ENCODE measurements at regions of chr18 and their contacts with region 1.

Region 1: GRCh38 chr18:23131693-23132319 is 3.5 kb upstream of the CABLES1 start:
- DNase-seq: peak in 8 of 9 donors; percentile 33 to 73 (median 58)
- ATAC-seq: peak; percentile 64
- H3K4me3 ChIP-seq: no peak overlapping the region
- H3K4me3 Mint-ChIP-seq: no peak overlapping the region
- H3K27ac ChIP-seq: no peak overlapping the region
- H3K27ac Mint-ChIP-seq: peak overlapping the region in 1 of 9 donors; percentile 9
- H3K4me1 ChIP-seq: peaks cover 0 to 14% of the 10 kb centered on the region in 2 donors
- H3K4me1 Mint-ChIP-seq: peaks cover 0 to 20% (median 15%) of the 10 kb centered on the region in 7 donors
- H3K27me3 ChIP-seq: peaks cover 3 to 9% of the 10 kb centered on the region in 2 donors
- H3K27me3 Mint-ChIP-seq: peaks cover 16 to 30% (median 25%) of the 10 kb centered on the region in 5 donors

Region 2: GRCh38 chr18:23032030-23032582 is 99.7 kb before region 1 on chr18:
- CTCF ChIA-PET with region 1: interaction called, 3 read pairs
- POLR2A ChIA-PET with region 1: no interaction called
- intact Hi-C with region 1: loop called (anchors 1 to 2 kb)
- DNase-seq: no peak
- ATAC-seq: no peak
- H3K4me3 ChIP-seq: no peak overlapping the region
- H3K4me3 Mint-ChIP-seq: no peak overlapping the region
- H3K27ac ChIP-seq: no peak overlapping the region
- H3K27ac Mint-ChIP-seq: peak overlapping the region in 2 of 9 donors; percentile 51
- H3K4me1 ChIP-seq: no peaks in the 10 kb centered on the region
- H3K4me1 Mint-ChIP-seq: peaks cover 0 to 12% (median 8%) of the 10 kb centered on the region in 7 donors
- H3K27me3 ChIP-seq: no peaks in the 10 kb centered on the region
- H3K27me3 Mint-ChIP-seq: no peaks in the 10 kb centered on the region

Region 3: GRCh38 chr18:23106580-23106979 is 25.2 kb before region 1 on chr18:
- CTCF ChIA-PET with region 1: interaction called, 10 read pairs
- POLR2A ChIA-PET with region 1: no interaction called
- intact Hi-C with region 1: no loop called
- DNase-seq: no peak
- ATAC-seq: no peak
- H3K4me3 ChIP-seq: no peak overlapping the region
- H3K4me3 Mint-ChIP-seq: no peak overlapping the region
- H3K27ac ChIP-seq: no peak overlapping the region
- H3K27ac Mint-ChIP-seq: peak overlapping the region in 1 of 9 donors; percentile 15
- H3K4me1 ChIP-seq: no peaks in the 10 kb centered on the region
- H3K4me1 Mint-ChIP-seq: peaks cover 0 to 11% (median 7%) of the 10 kb centered on the region in 7 donors
- H3K27me3 ChIP-seq: no peaks in the 10 kb centered on the region
- H3K27me3 Mint-ChIP-seq: peaks cover 0 to 11% (median 0%) of the 10 kb centered on the region in 5 donors

Region 4: GRCh38 chr18:23231340-23232021 is 99.7 kb after region 1 on chr18:
- CTCF ChIA-PET with region 1: no interaction called
- POLR2A ChIA-PET with region 1: no interaction called
- intact Hi-C with region 1: loop called (anchors 1 to 5 kb)
- DNase-seq: peak; percentile 14 to 86 (median 70)
- ATAC-seq: peak; percentile 93
- H3K4me3 ChIP-seq: peak overlapping the region; percentile 10
- H3K4me3 Mint-ChIP-seq: peak overlapping the region in 9 of 10 donors; percentile 7 to 80 (median 55)
- H3K27ac ChIP-seq: no peak overlapping the region
- H3K27ac Mint-ChIP-seq: peak overlapping the region; percentile 76 to 96 (median 88)
- H3K4me1 ChIP-seq: peaks cover 8 to 14% of the 10 kb centered on the region in 2 donors
- H3K4me1 Mint-ChIP-seq: peaks cover 0 to 78% (median 21%) of the 10 kb centered on the region in 7 donors
- H3K27me3 ChIP-seq: no peaks in the 10 kb centered on the region
- H3K27me3 Mint-ChIP-seq: no peaks in the 10 kb centered on the region

Region 5: GRCh38 chr18:23330423-23330822 is 198.6 kb after region 1 on chr18:
- CTCF ChIA-PET with region 1: no interaction called
- POLR2A ChIA-PET with region 1: no interaction called
- intact Hi-C with region 1: no loop called
- DNase-seq: no peak
- ATAC-seq: no peak
- H3K4me3 ChIP-seq: no peak overlapping the region
- H3K4me3 Mint-ChIP-seq: no peak overlapping the region
- H3K27ac ChIP-seq: no peak overlapping the region
- H3K27ac Mint-ChIP-seq: no peak overlapping the region
- H3K4me1 ChIP-seq: no peaks in the 10 kb centered on the region
- H3K4me1 Mint-ChIP-seq: no peaks in the 10 kb centered on the region
- H3K27me3 ChIP-seq: no peaks in the 10 kb centered on the region
- H3K27me3 Mint-ChIP-seq: no peaks in the 10 kb centered on the region

Region 6: DNA sequence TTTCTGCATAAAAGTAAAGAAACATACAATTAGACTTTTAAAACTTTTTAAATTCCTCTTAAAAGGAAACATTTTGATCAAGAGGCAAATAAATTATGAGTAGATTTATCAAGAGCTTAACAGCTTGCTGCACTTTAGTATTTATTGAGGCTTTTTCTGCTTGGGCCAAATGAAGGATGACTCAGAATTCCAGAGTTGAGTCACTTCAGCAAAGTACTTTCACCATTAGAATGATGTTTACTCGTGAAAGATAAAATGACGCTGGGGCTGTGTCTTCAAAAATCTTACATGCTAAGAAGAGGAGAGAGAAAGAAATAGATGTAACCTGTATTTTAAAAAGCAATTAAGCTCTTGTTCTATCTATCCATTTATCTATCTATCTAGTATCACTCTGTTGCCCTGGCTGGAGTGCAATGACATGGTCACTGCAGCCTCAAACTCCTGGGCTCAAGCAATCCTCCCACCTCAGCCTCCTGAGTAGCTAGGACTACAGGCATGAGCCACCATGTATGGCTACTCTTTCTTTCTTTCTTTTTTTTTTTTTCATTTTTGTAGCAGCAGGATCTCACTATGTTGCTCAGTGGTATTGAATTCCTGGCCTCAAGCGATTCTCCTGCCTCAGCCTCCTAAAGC is 246.0 kb after region 1 on chr18:
- CTCF ChIA-PET with region 1: interaction called, 3 read pairs
- POLR2A ChIA-PET with region 1: no interaction called
- intact Hi-C with region 1: loop called (anchors 1 kb)
- DNase-seq: no peak
- ATAC-seq: no peak
- H3K4me3 ChIP-seq: no peak overlapping the region
- H3K4me3 Mint-ChIP-seq: no peak overlapping the region
- H3K27ac ChIP-seq: no peak overlapping the region
- H3K27ac Mint-ChIP-seq: peak overlapping the region in 1 of 9 donors; percentile 60
- H3K4me1 ChIP-seq: no peaks in the 10 kb centered on the region
- H3K4me1 Mint-ChIP-seq: peaks cover 0 to 15% (median 0%) of the 10 kb centered on the region in 7 donors
- H3K27me3 ChIP-seq: no peaks in the 10 kb centered on the region
- H3K27me3 Mint-ChIP-seq: no peaks in the 10 kb centered on the region

Region 7: GRCh38 chr18:23412351-23412964 is 280.7 kb after region 1 on chr18:
- CTCF ChIA-PET with region 1: interaction called, 5 read pairs
- POLR2A ChIA-PET with region 1: interaction called, 3 read pairs
- intact Hi-C with region 1: loop called (anchors 1 kb)
- DNase-seq: no peak
- ATAC-seq: no peak
- H3K4me3 ChIP-seq: no peak overlapping the region
- H3K4me3 Mint-ChIP-seq: no peak overlapping the region
- H3K27ac ChIP-seq: no peak overlapping the region
- H3K27ac Mint-ChIP-seq: no peak overlapping the region
- H3K4me1 ChIP-seq: no peaks in the 10 kb centered on the region
- H3K4me1 Mint-ChIP-seq: peaks cover 0 to 8% (median 0%) of the 10 kb centered on the region in 7 donors
- H3K27me3 ChIP-seq: no peaks in the 10 kb centered on the region
- H3K27me3 Mint-ChIP-seq: no peaks in the 10 kb centered on the region

Measured in naive thymus-derived CD4-positive, alpha-beta T cell (primary cell).